Mammary epithelial cell (primary cell): ENCODE measurements at regions of chr6 and their contacts with region 1.

Region 1: DNA sequence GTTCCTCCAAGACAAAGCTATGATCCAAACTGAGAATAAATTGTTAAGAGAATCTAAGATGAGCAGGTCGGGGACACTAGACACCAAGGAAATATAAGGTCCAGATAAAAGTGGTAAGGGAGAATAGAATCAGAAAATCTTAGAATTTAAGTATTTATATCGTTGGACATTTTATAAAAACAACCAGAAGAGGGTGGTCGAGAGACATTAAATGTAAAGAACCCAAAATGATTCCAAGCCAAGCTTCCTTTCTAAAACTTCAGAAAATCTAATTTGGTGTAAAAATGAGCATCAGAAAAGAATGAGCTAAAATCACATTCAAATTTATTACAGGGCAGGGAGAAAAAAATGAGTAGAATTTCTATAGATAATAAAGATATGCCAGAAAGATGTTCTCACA is 97.8 kb upstream of the OGFRL1 start:
- DNase-seq: peak; percentile 5
- H3K4me3 ChIP-seq: no peak overlapping the region
- H3K27ac ChIP-seq: no peak overlapping the region
- H3K4me1 ChIP-seq: peaks cover 10% of the 10 kb centered on the region
- H3K27me3 ChIP-seq: no peaks in the 10 kb centered on the region
- CTCF ChIP-seq: peak in 1 of 2 donors; percentile 31

Region 2: DNA sequence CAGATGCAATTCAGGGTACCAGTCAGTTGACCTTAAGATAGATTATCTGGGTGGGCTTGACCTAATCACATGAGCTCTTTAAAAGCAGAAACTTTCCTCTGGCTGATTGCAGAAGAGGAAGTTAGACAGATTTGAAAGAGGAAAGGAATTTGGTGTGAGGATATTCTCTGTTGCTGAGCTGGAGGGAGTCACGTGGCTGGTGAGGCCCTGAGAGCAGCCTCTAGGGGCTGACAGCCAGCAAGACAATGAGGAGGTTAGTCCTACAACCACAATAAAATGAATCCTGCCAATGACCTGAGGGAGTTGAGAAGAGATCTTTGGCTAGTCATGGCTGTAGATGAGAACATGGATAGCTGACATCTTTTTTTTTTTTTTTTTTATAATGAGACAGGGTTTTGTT is 146.9 kb before region 1 on chr6:
- CTCF ChIA-PET with region 1: no interaction called
- dilution Hi-C with region 1: no loop called
- in situ Hi-C with region 1: no loop called
- intact Hi-C with region 1: no loop called
- DNase-seq: peak; percentile 5
- H3K4me3 ChIP-seq: no peak overlapping the region
- H3K27ac ChIP-seq: no peak overlapping the region
- H3K4me1 ChIP-seq: no peaks in the 10 kb centered on the region
- H3K27me3 ChIP-seq: no peaks in the 10 kb centered on the region
- CTCF ChIP-seq: no peak

Region 3: GRCh38 chr6:71288228-71289001 is 97.6 kb after region 1 on chr6 and contains the start of gene OGFRL1:
- CTCF ChIA-PET with region 1: interaction called, 3 read pairs
- dilution Hi-C with region 1: loop called (anchors 5 kb)
- in situ Hi-C with region 1: no loop called
- intact Hi-C with region 1: loop called (anchors 1 kb)
- DNase-seq: peak; percentile 73
- H3K4me3 ChIP-seq: peak within 1 kb of the TSS; percentile 74 to 88 (median 81)
- H3K27ac ChIP-seq: peak within 1 kb of the TSS; percentile 45
- H3K4me1 ChIP-seq: peaks cover 50% of the 10 kb centered on the region
- H3K27me3 ChIP-seq: no peaks in the 10 kb centered on the region
- CTCF ChIP-seq: peak in 1 of 2 donors; percentile 20
- total RNA-seq, gene OGFRL1: 33.4 to 106 TPM

Region 4: DNA sequence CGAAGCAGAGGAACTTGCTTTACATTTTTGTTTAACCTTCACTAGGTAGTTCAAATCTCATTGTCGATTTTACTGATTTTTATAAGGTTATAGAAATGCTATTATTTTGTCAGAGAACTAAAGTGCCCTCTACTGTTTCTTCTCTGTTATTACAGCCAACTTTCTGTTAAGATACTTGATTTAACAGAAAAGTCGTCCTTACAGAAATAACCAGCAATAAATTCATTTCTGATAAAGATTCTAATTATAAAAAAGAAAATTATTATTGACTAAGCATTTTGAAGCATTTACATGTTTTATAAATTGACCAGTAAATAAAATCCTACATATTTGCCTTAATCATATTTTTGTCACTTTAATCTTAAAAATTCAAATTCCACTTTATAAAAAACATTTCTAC is 158.6 kb after region 1 on chr6:
- CTCF ChIA-PET with region 1: no interaction called
- dilution Hi-C with region 1: no loop called
- in situ Hi-C with region 1: loop called in 1 of 2 experiments (anchors 10 kb)
- intact Hi-C with region 1: loop called (anchors 1 kb)
- DNase-seq: no peak
- H3K4me3 ChIP-seq: no peak overlapping the region
- H3K27ac ChIP-seq: no peak overlapping the region
- H3K4me1 ChIP-seq: peaks cover 8% of the 10 kb centered on the region
- H3K27me3 ChIP-seq: no peaks in the 10 kb centered on the region
- CTCF ChIP-seq: peak; percentile 49 to 68

Region 5: DNA sequence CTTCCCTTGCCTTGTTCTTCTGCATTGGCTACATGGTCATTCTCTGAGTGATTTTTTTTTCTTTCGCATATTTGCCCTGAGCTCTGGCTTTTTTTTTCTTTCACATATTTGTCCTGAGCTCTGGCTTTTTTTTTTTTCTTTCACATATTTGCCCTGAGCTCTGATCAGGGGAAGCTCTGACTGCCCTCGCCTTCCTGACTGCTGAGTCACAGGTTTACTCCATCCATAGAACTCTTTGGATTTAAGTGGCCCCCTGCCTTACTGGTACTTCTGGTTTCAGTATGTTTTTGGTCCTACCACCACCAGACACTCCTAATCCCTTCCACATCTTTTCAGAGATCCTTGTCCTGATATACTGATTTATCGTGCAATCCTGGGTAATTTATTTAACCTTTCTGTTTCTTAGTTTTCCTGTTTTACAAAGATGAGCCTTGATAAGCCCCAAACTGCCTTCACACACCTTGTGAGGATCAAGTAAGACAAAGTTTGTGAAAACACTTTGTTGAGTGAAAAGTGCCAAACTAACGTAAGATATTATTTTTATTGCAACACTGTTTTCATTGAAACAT is 299.0 kb after region 1 on chr6:
- CTCF ChIA-PET with region 1: no interaction called
- dilution Hi-C with region 1: no loop called
- in situ Hi-C with region 1: no loop called
- intact Hi-C with region 1: loop called (anchors 10 kb)
- DNase-seq: peak; percentile 67
- H3K4me3 ChIP-seq: no peak overlapping the region
- H3K27ac ChIP-seq: peak overlapping the region; percentile 16
- H3K4me1 ChIP-seq: peaks cover 11% of the 10 kb centered on the region
- H3K27me3 ChIP-seq: no peaks in the 10 kb centered on the region
- CTCF ChIP-seq: no peak

Region 6: GRCh38 chr6:71602385-71603007 is 411.7 kb after region 1 on chr6:
- CTCF ChIA-PET with region 1: no interaction called
- dilution Hi-C with region 1: no loop called
- in situ Hi-C with region 1: no loop called
- intact Hi-C with region 1: no loop called
- DNase-seq: peak; percentile 86
- H3K4me3 ChIP-seq: peak overlapping the region in 1 of 3 experiments; percentile 18
- H3K27ac ChIP-seq: peak overlapping the region; percentile 39
- H3K4me1 ChIP-seq: peaks cover 11% of the 10 kb centered on the region
- H3K27me3 ChIP-seq: no peaks in the 10 kb centered on the region
- CTCF ChIP-seq: no peak